Common myeloid progenitor, CD34-positive (primary cell): ENCODE measurements at regions of chr7 and their contacts with region 1.

Region 1: GRCh38 chr7:77696198-77697028 is at the start of gene RSBN1L:
- DNase-seq: peak; percentile 98 to 99 (median 99)
- H3K4me3 ChIP-seq: peak within 1 kb of the TSS; percentile 97 to 100 (median 99)
- H3K27ac ChIP-seq: peak within 1 kb of the TSS; percentile 87 to 96
- H3K4me1 ChIP-seq: peaks cover 15 to 42% (median 26%) of the 10 kb centered on the region in 4 experiments
- H3K27me3 ChIP-seq: no peaks in the 10 kb centered on the region

Region 2: DNA sequence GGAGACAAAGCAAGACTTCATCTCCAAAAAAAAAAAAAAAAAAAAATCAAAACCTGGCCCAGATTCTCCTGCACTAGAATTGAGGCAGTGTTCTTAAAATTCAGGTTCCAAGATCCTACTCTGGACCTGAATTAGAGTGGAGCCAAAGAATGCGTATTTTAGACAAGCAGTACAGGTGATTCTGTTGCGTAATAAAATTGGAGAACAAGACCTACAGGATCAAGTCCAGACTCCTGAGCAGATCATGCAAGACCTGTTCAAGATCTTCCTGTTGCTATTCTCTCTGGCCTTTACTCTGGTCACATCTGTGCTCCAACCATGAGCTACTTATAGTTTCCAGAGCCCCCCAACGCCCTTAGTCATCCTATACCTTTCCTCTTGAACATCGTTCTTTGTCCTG is 51.6 kb before region 1 on chr7:
- CTCF ChIA-PET with region 1: no interaction called
- POLR2A ChIA-PET with region 1: no interaction called
- DNase-seq: no peak
- H3K4me3 ChIP-seq: no peak overlapping the region
- H3K27ac ChIP-seq: no peak overlapping the region
- H3K4me1 ChIP-seq: no peaks in the 10 kb centered on the region
- H3K27me3 ChIP-seq: no peaks in the 10 kb centered on the region

Region 3: GRCh38 chr7:77707504-77707992 is 11.1 kb after region 1 on chr7:
- CTCF ChIA-PET with region 1: interaction called, 11 read pairs
- POLR2A ChIA-PET with region 1: interaction called, 5 read pairs
- DNase-seq: no peak
- H3K4me3 ChIP-seq: no peak overlapping the region
- H3K27ac ChIP-seq: no peak overlapping the region
- H3K4me1 ChIP-seq: peaks cover 0 to 8% (median 5%) of the 10 kb centered on the region in 4 experiments
- H3K27me3 ChIP-seq: no peaks in the 10 kb centered on the region

Region 4: GRCh38 chr7:77716804-77717203 is 20.4 kb after region 1 on chr7:
- CTCF ChIA-PET with region 1: interaction called, 10 read pairs
- POLR2A ChIA-PET with region 1: interaction called, 5 read pairs
- DNase-seq: no peak
- H3K4me3 ChIP-seq: no peak overlapping the region
- H3K27ac ChIP-seq: no peak overlapping the region
- H3K4me1 ChIP-seq: peaks cover 0 to 12% (median 1%) of the 10 kb centered on the region in 4 experiments
- H3K27me3 ChIP-seq: no peaks in the 10 kb centered on the region

Region 5: GRCh38 chr7:77743518-77743917 is 47.1 kb after region 1 on chr7:
- CTCF ChIA-PET with region 1: interaction called, 10 read pairs
- POLR2A ChIA-PET with region 1: no interaction called
- DNase-seq: no peak
- H3K4me3 ChIP-seq: no peak overlapping the region
- H3K27ac ChIP-seq: no peak overlapping the region
- H3K4me1 ChIP-seq: no peaks in the 10 kb centered on the region
- H3K27me3 ChIP-seq: no peaks in the 10 kb centered on the region